ENCODE measurements at regions of chr15 and their contacts with region 1.

Region 1: GRCh38 chr15:32683906-32684584 is 33.8 kb upstream of the GREM1 start:
- DNase-seq: no peak

Region 2: DNA sequence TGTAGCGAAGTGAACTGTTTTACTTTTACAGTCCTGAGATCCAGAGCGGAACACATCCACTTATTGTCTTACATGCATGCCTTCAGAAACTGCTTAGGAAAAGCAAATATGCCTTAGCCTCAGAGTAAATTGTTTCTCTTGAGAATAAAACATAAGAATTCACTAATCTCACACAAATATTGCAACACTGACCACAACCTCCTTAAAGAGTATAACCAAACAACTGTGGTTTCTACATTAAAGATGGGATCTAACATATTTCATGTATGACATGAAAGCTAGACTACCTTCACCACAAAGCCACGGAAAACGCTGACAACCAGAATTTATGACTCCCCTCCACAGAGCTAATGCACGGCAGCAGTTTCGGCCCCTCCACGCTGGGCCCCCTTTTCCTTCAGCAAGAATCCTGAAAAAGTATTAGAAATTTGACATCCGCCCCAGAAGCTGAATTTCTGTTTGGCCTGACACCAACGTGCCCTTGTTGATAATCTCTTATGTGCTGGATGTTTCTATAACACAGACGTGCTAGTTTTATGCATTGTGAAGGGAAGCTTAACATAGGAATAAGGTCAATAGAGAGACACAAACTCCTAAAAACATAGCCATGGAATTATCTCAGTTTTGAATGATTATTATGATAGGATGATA is 118.4 kb after region 1 on chr15:
- in situ Hi-C with region 1: loop called (anchors 25 kb)
- DNase-seq: no peak

Region 3: DNA sequence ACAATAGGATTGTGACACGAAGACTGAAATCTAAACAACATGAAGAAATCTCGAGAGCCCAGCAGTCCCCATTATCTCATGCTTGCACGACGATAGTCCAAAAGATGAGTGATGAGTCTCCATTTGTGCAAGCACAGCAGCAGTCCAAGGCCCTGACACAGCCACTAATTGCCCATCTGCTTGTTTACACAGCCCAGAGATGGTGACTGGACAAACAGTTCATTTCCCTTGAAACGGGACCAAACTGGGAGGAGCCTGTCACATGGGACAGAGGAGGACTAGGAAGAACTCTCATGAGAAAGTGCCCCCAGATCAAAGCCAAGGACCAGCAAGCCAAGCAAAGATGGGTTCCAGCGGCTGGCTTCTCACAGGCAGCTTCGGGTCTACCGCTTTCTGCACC is 154.8 kb after region 1 on chr15:
- in situ Hi-C with region 1: no loop called
- DNase-seq: no peak

Measured in SK-MEL-5 (cell line).